ENCODE measurements at regions of chr7 and their contacts with region 1.

Region 1: GRCh38 chr7:37181550-37181932 is 267.1 kb downstream of the ELMO1 start:
- DNase-seq: no peak
- H3K4me3 ChIP-seq: no peak overlapping the region
- H3K27ac ChIP-seq: no peak overlapping the region
- H3K4me1 ChIP-seq: no peaks in the 10 kb centered on the region
- H3K27me3 ChIP-seq: no peaks in the 10 kb centered on the region
- CTCF ChIP-seq: no peak
- POLR2A ChIP-seq: no peak

Region 2: DNA sequence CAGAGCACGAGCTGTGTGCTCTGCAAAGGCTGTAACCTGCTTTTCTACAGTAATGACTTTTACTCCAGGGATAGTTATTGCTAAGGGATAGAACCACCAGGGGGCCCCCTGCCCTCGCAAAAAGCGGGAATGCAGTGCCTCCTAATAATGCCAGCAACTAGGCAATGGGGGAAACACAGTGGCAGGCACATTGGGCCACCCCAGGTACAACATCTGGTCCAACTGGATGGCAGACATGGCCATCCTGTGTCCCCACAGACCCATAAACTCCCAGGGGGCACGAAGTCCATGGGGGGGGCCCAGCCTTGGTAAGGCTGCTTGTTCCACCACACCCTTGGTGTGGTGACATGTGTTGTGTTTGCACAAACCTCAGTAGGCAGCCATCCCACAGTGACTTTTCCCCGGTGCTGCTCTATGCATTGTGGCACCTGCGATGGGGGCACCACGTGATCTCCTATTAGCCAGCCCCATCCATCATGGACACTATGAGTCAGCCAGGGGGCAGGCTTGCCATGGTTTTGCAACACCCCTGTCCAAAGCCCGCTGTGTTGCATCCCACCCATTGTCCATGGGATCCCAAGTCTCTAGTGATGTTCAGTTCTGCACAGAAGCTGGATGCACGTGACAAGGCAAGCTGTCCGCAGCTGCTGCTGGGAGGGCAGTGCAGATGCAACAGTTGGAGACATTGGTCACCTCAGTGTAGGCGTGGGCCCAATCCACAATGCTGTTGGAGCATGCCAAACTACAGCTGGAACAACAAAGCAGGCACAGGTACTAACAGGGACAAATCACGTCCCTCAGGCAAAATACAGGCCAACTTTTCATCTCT is 707.9 kb before region 1 on chr7:
- CTCF ChIA-PET with region 1: interaction called, 17 read pairs
- POLR2A ChIA-PET with region 1: no interaction called
- dilution Hi-C with region 1: no loop called
- intact Hi-C with region 1: loop called (anchors 1 kb)
- DNase-seq: peak; percentile 40
- H3K4me3 ChIP-seq: no peak overlapping the region
- H3K27ac ChIP-seq: peak overlapping the region; percentile 54
- H3K4me1 ChIP-seq: peaks cover 22% of the 10 kb centered on the region
- H3K27me3 ChIP-seq: no peaks in the 10 kb centered on the region
- CTCF ChIP-seq: peak; percentile 55 to 57
- POLR2A ChIP-seq: no peak

Region 3: GRCh38 chr7:36962367-36962766 is 219.2 kb before region 1 on chr7:
- CTCF ChIA-PET with region 1: interaction called, 366 read pairs
- POLR2A ChIA-PET with region 1: interaction called, 3 read pairs
- dilution Hi-C with region 1: no loop called
- intact Hi-C with region 1: loop called (anchors 1 kb)
- DNase-seq: no peak
- H3K4me3 ChIP-seq: no peak overlapping the region
- H3K27ac ChIP-seq: no peak overlapping the region
- H3K4me1 ChIP-seq: peaks cover 14% of the 10 kb centered on the region
- H3K27me3 ChIP-seq: no peaks in the 10 kb centered on the region
- CTCF ChIP-seq: no peak
- POLR2A ChIP-seq: no peak

Region 4: DNA sequence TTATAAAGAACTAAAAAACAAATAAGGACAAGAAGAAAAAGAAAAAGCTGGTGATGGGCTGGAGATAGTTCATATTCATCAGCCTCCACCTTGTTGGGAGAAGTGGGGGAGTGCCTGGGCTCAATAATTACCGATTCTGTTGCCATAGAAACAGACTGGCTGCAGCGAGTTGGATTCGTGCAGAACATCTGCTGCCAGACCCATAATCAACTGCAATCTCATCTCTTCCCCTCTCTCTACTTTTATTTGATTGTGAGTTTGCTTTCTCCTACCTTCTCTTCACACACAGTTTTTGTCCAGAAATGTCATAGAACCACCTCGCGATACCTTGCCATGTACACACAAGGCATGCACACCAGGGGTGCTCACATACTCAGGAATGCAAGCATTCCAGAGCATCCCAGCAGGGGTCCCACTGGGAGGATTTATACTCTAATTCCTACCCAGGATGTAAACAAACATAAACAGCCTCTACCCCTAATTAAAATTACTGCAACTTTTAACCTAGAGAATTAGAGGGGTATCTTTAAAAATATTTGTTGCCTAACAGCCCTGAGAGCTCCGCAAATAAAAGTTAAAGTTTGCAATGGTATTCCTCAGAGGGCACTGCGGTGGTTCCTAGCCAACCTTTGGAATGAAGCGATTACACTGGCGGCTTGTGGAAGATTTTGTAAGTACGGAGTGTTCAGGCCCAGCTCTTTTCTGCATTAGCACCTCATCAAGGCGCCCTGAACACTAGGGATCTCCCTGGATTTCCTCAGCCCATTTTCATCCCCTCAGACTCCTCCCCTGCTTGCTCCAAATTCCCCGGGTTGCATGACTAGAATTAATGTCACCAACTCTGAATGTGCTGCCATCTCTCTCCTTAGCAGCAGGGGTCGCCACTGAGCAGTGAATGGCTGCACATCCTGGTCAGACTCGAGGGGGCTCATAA is 194.8 kb before region 1 on chr7:
- CTCF ChIA-PET with region 1: interaction called, 374 read pairs
- POLR2A ChIA-PET with region 1: no interaction called
- dilution Hi-C with region 1: loop called (anchors 25 kb)
- intact Hi-C with region 1: loop called (anchors 1 kb)
- DNase-seq: peak; percentile 54
- H3K4me3 ChIP-seq: no peak overlapping the region
- H3K27ac ChIP-seq: no peak overlapping the region
- H3K4me1 ChIP-seq: no peaks in the 10 kb centered on the region
- H3K27me3 ChIP-seq: no peaks in the 10 kb centered on the region
- CTCF ChIP-seq: peak; percentile 86 to 92
- POLR2A ChIP-seq: no peak

Region 5: DNA sequence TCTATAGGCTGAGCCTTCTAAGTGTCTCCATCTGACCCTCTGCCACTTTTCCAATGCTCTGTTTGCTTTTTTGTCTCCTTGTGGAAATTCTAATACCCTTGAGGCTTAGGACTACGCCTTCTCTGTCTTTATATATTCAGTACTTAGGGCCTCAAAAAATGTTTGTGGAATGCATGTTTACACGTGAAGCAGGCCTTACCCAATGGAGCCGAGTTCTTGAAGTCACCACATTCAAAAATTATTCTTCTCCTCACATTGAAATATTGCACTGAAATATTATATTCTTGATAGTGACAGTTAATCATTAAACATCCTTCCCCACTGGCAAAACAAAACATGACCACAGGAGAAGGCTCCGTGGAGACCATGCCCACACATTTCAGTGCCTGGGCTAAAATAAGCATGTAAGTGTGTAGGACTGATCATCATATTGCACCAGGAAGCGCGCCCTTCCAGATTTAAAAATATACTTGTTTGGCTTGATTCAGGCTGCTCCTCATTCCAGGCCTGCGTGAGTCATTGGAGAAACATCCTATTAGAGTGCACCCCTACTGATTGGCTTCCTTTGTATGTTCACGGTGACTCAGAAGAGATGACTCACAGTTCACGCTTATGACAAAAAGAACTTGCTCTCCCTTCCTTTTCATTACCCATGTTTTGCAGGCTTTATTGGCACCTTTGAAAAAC is 149.8 kb before region 1 on chr7:
- CTCF ChIA-PET with region 1: interaction called, 14 read pairs
- POLR2A ChIA-PET with region 1: no interaction called
- dilution Hi-C with region 1: no loop called
- intact Hi-C with region 1: no loop called
- DNase-seq: peak; percentile 100
- H3K4me3 ChIP-seq: no peak overlapping the region
- H3K27ac ChIP-seq: peak overlapping the region; percentile 77
- H3K4me1 ChIP-seq: peaks cover 32% of the 10 kb centered on the region
- H3K27me3 ChIP-seq: no peaks in the 10 kb centered on the region
- CTCF ChIP-seq: no peak
- POLR2A ChIP-seq: peak; percentile 35

Region 6: DNA sequence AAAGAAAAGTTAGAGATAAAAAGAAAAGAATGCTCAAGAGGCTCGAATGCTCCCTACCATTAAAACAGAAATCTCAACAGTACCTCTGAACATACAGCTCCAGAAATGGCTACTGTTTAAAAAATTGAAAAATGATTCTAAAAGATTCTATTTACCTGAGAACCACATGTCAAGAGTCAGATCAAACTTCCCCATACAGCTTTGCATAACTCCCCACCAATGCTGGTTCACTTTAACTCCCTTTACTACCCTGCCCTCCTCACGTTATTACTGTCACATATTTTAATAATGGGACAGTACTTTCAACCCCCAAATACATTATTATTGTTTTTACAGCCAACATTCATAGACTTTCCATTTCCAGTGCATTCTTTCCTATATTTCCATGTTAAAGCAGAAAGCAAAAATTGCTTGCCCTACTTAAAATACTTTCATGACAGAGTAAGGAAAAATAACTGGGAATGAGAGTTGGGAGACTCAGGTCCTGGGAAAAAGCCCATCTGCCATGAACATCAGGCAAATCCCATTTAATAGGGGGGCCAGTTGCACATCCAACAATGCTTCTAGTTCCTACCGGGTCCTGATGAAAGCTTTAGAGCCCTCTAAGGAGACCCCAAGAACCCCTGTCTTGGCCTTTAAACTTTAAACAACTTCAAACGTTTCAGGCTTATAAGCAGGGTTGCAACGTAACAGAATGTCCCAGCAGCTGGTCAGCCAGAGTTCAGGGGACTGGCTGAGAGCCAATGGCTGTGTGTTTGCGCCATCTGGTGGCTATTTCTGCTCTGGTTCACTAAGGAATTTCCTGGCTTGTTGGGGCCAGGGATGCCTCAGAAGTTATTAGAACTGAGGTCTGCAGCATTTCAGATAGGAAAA is 19.7 kb after region 1 on chr7:
- CTCF ChIA-PET with region 1: interaction called, 49 read pairs
- POLR2A ChIA-PET with region 1: no interaction called
- dilution Hi-C with region 1: no loop called
- intact Hi-C with region 1: no loop called
- DNase-seq: peak; percentile 87
- H3K4me3 ChIP-seq: no peak overlapping the region
- H3K27ac ChIP-seq: no peak overlapping the region
- H3K4me1 ChIP-seq: peaks cover 3% of the 10 kb centered on the region
- H3K27me3 ChIP-seq: no peaks in the 10 kb centered on the region
- CTCF ChIP-seq: peak; percentile 79 to 90
- POLR2A ChIP-seq: no peak